ENCODE measurements at regions of chr5 and their contacts with region 1.

Region 1: GRCh38 chr5:54469622-54470021 is 14.1 kb downstream of the HSPB3 start:
- DNase-seq: no peak
- H3K4me3 ChIP-seq: peak overlapping the region in 2 of 3 donors; percentile 10 to 46
- H3K27ac ChIP-seq: peak overlapping the region; percentile 30 to 63
- H3K4me1 ChIP-seq: no peaks in the 10 kb centered on the region
- H3K27me3 ChIP-seq: no peaks in the 10 kb centered on the region
- CTCF ChIP-seq: no peak
- POLR2A ChIP-seq: no peak

Region 2: DNA sequence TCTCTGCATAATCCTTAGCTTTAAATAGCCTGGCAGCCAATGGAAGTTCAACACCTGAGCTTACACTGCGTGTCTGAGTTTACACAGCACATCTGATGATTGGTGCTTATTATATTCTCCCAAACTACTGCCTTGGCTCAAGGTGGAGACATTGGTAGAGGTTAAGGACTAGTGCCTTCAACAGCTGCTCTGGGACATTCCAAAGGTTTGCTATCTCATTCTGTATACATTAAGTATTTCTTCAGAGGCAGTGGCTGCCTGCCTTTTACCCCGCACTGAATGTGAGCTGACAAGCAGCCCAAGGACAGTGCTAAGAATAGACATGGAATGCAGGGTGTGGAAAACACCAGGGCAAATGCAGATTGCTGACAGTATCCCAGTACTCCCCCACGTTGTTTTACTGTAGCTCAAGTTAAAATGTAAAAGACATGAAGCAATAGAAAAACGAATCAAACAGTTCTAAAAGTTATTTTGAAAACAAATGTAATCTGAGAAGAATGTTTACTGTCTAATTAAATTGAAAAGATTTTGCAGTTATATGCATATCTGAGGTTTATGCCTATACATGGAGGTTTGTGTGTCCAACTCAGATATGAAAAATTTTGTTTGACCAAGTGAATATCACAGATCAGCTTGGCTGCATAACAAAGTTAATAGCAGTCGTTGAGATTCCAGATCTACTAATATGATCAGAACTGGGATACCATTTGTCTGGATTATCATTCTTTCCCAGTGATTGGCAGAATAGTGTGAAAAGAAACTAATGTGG is 12.3 kb before region 1 on chr5:
- intact Hi-C with region 1: no loop called
- DNase-seq: no peak
- H3K4me3 ChIP-seq: no peak overlapping the region
- H3K27ac ChIP-seq: no peak overlapping the region
- H3K4me1 ChIP-seq: no peaks in the 10 kb centered on the region
- H3K27me3 ChIP-seq: no peaks in the 10 kb centered on the region
- CTCF ChIP-seq: no peak
- POLR2A ChIP-seq: no peak

Region 3: DNA sequence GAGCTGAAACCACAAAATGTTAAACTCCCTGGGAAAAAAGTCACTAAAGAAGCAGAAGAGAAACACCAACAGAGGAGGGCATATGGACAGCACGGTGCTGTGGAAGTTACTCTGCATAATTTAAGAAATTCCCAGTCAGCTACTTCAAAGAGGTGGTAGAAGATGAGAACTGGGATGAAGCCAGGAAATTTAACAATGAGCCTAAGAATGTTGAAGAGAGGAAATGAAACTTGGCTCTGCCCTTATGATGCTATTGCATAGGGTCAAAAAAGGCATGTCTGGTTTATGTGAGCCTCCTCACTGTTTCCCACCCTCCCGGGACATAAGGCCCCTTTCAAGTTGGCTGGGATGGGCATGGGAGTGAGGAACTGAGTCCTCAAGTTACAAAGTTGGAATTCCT is 22.6 kb after region 1 on chr5:
- intact Hi-C with region 1: loop called (anchors 1 kb)
- DNase-seq: no peak
- H3K4me3 ChIP-seq: no peak overlapping the region
- H3K27ac ChIP-seq: peak overlapping the region in 1 of 2 donors; percentile 9
- H3K4me1 ChIP-seq: no peaks in the 10 kb centered on the region
- H3K27me3 ChIP-seq: no peaks in the 10 kb centered on the region
- CTCF ChIP-seq: no peak
- POLR2A ChIP-seq: no peak